IMR-90 (cell line): ENCODE measurements at regions of chrX and their contacts with region 1.

Region 1: DNA sequence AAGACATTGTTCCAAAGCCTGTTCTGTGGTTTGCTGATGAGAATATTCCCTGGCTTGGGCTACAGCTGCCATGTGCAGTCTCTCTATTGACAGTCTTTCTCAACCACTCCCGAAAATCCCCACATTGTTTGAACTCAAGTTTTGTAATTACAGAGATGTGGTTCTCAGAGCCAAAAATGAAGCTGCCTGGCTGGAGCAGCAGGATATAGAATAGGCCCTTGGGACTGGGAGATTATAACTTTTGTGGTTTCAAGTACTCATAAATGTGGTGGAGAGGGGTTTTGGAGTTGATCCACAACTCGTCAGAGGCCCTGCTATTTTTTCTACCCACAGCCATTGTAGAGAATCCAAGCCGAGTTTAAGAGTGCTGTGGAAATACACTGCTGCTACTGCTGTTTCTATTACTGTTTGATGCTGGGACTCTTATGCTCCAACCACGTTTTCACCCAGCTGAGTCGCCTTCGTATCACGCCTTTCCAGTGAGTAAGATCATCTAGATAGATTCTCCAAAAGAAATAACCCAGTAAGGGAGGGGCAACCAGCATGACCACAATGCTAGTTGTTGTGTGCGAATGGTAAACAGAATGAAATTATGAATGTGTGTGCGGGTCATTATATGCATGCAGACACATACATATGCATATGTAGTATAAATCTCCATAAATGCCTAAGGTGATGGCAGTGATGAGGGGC is 57.1 kb upstream of the ATXN3L start:
- DNase-seq: peak; percentile 95
- ATAC-seq: peak; percentile 45
- H3K4me3 ChIP-seq: no peak overlapping the region
- H3K27ac ChIP-seq: peak overlapping the region; percentile 97
- H3K4me1 ChIP-seq: peaks cover 15% of the 10 kb centered on the region
- H3K27me3 ChIP-seq: no peaks in the 10 kb centered on the region
- CTCF ChIP-seq: no peak
- POLR2A ChIP-seq: no peak
- RAD21 ChIP-seq: no peak

Region 2: GRCh38 chrX:12984629-12985319 is 392.2 kb before region 1 on chrX:
- CTCF ChIA-PET with region 1: no interaction called
- POLR2A ChIA-PET with region 1: no interaction called
- dilution Hi-C with region 1: no loop called
- in situ Hi-C with region 1: loop called (anchors 10 kb)
- intact Hi-C with region 1: loop called (anchors 2 kb)
- DNase-seq: peak; percentile 35
- ATAC-seq: no peak
- H3K4me3 ChIP-seq: no peak overlapping the region
- H3K27ac ChIP-seq: no peak overlapping the region
- H3K4me1 ChIP-seq: no peaks in the 10 kb centered on the region; the same call in 1 of the 2 replicates
- H3K27me3 ChIP-seq: no peaks in the 10 kb centered on the region
- CTCF ChIP-seq: no peak
- POLR2A ChIP-seq: no peak
- RAD21 ChIP-seq: no peak

Region 3: GRCh38 chrX:13123857-13124345 is 253.1 kb before region 1 on chrX:
- CTCF ChIA-PET with region 1: no interaction called
- POLR2A ChIA-PET with region 1: no interaction called
- dilution Hi-C with region 1: no loop called
- in situ Hi-C with region 1: no loop called
- intact Hi-C with region 1: loop called (anchors 10 kb)
- DNase-seq: peak; percentile 85
- ATAC-seq: peak; percentile 60
- H3K4me3 ChIP-seq: no peak overlapping the region
- H3K27ac ChIP-seq: peak overlapping the region; percentile 96
- H3K4me1 ChIP-seq: peaks cover 7% of the 10 kb centered on the region
- H3K27me3 ChIP-seq: no peaks in the 10 kb centered on the region
- CTCF ChIP-seq: no peak
- POLR2A ChIP-seq: no peak
- RAD21 ChIP-seq: no peak

Region 4: GRCh38 chrX:13212191-13212651 is 164.8 kb before region 1 on chrX:
- CTCF ChIA-PET with region 1: no interaction called
- POLR2A ChIA-PET with region 1: no interaction called
- dilution Hi-C with region 1: no loop called
- in situ Hi-C with region 1: no loop called
- intact Hi-C with region 1: loop called (anchors 10 kb)
- DNase-seq: peak; percentile 13
- ATAC-seq: no peak; the same call in 1 of the 2 replicates
- H3K4me3 ChIP-seq: no peak overlapping the region
- H3K27ac ChIP-seq: peak overlapping the region; percentile 87; the same call in 1 of the 2 replicates
- H3K4me1 ChIP-seq: peaks cover 1% of the 10 kb centered on the region; the same call in 1 of the 2 replicates
- H3K27me3 ChIP-seq: no peaks in the 10 kb centered on the region
- CTCF ChIP-seq: no peak
- POLR2A ChIP-seq: no peak
- RAD21 ChIP-seq: no peak

Region 5: GRCh38 chrX:13398073-13398823 is 21.2 kb after region 1 on chrX:
- CTCF ChIA-PET with region 1: interaction called, 4 read pairs
- POLR2A ChIA-PET with region 1: no interaction called
- dilution Hi-C with region 1: no loop called
- in situ Hi-C with region 1: no loop called
- intact Hi-C with region 1: loop called (anchors 2 kb)
- DNase-seq: peak; percentile 100
- ATAC-seq: peak; percentile 94
- H3K4me3 ChIP-seq: no peak overlapping the region
- H3K27ac ChIP-seq: peak overlapping the region; percentile 41
- H3K4me1 ChIP-seq: peaks cover 4% of the 10 kb centered on the region
- H3K27me3 ChIP-seq: no peaks in the 10 kb centered on the region
- CTCF ChIP-seq: no peak
- POLR2A ChIP-seq: no peak
- RAD21 ChIP-seq: peak; percentile 35